ENCODE measurements at regions of chr1 and their contacts with region 1.

Region 1: DNA sequence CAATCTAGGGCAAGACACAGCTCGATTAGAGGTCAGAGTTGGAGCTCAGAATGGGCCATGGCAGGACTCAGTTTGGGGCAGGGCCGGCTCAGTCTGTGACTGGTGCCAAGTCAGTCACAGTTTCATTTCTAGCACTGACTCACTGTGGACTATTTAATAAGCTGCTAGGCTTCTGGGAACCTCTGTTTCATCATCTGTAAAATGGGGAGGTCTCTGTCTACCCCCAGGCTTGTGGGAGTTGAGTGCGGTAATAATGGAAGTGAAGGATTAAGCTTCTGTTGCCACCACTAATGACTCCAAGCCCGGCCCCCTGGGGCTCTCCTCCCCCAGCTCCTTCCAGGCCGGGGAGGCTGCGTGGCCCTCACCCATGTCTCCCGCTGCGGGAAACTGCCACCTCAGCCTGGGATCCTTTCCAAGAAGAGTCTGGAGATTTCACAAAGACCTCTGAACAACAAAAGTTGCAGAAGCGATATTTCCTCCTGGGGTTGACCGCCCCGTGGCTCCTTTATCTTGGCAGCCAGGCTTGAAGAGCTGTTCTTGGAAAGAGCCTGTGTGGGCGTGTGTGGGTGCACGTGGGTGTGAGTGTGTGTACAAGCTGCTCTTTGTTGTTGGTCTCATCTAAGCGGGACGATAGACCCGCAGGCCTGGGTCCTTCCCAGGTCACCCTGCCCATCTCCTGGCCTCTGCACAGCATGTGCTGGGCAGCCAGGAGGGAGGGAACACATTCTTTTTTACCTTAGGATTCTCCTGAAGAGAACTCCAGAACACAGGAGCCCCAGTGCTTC is 29.1 kb downstream of the KNCN start:
- DNase-seq: peak; percentile 69
- ATAC-seq: peak; percentile 97
- H3K4me3 Mint-ChIP-seq: peak overlapping the region; percentile 10
- H3K27ac Mint-ChIP-seq: peak overlapping the region; percentile 73
- H3K4me1 Mint-ChIP-seq: peaks cover 14% of the 10 kb centered on the region
- H3K27me3 Mint-ChIP-seq: peaks cover 29% of the 10 kb centered on the region

Region 2: DNA sequence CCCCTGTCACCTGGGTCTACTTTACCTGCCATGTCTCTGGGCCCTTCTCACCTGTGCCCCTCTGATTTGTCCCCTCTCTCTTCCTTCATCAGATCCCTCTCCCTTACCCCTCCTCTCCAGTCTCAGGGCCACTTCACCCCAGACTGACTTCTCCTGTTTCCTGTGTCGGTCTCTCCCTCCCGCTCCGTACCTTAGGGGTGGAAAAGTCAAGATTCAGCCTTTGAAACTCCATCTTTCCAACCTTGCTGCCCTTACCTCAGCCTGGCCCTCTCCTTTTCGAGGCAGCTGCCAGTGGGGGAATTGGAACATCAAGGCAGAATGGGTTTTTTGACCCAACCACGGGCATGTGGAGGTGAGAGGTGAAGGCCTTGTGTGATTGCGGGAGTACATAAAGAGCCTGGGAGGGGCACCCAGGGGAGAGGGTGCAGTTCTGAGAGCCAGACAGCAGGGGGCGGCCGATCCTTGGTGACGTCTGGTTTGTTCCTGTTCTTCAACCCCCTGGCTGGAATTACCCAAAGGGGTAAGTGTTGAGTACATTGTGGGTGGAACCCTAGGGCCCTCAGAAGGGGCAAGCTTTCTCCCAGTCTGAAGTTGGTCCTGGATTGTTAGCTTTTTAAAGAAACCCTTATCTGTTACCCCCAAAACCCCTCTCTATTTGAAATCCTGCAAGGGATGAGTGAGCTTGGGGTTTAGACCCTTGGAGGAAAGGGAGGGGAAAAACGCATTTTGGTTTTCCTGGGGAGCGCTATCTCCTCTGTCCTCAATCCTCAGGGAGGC is 45.0 kb before region 1 on chr1:
- CTCF ChIA-PET with region 1: interaction called, 115 read pairs
- POLR2A ChIA-PET with region 1: no interaction called
- intact Hi-C with region 1: no loop called
- DNase-seq: peak; percentile 89
- ATAC-seq: peak; percentile 98
- H3K4me3 Mint-ChIP-seq: no peak overlapping the region
- H3K27ac Mint-ChIP-seq: no peak overlapping the region
- H3K4me1 Mint-ChIP-seq: no peaks in the 10 kb centered on the region
- H3K27me3 Mint-ChIP-seq: peaks cover 24% of the 10 kb centered on the region

Region 3: DNA sequence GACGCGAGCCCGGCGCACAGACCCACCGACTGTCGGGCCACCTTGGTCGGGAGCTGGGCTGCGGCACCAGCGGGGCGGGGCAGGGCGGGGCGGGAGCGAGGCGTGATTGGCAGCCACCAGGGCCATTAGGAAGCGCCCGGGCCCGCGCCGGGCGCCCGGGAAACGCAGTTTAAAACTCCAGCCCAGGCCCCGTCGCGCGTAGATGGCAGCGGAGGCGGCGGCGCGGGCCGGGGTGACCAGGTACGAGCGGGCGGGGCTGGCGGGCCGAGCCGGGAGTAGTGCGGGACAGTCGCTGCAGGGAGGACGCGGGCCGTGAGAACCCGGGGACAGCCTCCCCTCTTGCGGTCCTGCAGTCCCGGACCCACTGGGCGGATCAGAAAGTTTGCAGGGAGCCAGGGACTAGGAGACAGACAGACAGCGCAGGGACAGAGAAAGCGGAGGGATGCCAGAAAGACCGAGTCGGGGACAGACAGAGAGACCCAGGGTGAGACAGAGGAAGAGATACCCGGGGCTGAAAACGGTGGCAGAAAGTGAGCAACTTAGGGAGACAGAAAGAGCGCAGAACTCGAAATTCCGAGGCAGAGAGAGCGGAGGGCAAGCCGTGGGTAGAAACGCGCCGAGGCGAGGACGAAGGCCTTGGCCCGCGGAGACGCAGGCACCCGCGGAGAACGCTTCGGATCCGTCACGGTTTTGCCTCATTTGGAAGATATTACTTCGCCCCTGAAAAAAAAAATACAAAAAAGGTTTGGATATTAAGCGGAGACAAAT is 32.6 kb before region 1 on chr1 and contains the start of gene DMBX1:
- CTCF ChIA-PET with region 1: interaction called, 19 read pairs
- POLR2A ChIA-PET with region 1: no interaction called
- intact Hi-C with region 1: loop called in 1 of 2 experiments (anchors 1 kb)
- DNase-seq: peak; percentile 74
- ATAC-seq: peak; percentile 79
- H3K4me3 Mint-ChIP-seq: peak within 1 kb of the TSS; percentile 66
- H3K27ac Mint-ChIP-seq: no peak within 1 kb of the TSS
- H3K4me1 Mint-ChIP-seq: peaks cover 22% of the 10 kb centered on the region
- H3K27me3 Mint-ChIP-seq: peaks cover 76% of the 10 kb centered on the region
- total RNA-seq, gene DMBX1: 0.05 TPM in 1 of 2 experiments, not detected in the other

Region 4: DNA sequence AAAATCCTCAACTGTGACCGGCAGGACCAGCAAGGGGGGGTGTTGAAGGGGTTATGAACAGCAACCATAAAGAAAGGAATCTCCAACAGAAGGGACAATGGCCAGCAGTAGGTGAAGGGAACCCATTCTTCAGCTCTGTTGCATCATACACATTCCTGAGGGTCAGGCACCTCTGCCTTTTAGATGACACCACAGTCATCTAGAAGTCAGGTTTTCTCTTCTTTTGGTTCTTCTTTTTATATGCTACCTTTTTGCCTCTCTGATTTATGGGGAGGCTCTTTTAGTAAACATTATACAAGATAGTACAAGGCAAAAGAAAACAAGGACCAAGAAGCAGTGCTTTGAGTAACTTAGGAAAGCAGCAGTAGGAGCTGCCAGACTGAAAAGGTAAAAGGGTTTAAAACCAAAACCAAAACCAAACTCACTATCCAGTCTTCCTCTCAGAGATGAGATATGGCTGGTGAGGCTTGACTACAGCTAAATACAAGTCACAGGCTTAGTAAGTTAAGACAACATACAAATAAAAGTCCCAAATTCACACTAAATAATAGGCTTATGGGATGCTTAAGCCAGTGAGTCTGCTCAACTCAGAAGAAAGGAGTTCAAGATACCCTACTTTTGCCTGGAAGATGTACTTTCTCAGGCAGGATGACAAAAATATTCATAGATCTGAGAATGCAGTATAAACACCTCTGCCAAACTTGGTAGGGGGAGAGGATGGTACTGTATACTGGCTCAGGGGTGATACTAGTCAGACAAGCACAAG is 153.4 kb after region 1 on chr1:
- CTCF ChIA-PET with region 1: no interaction called
- POLR2A ChIA-PET with region 1: no interaction called
- intact Hi-C with region 1: no loop called
- DNase-seq: no peak
- ATAC-seq: peak; percentile 76
- H3K4me3 Mint-ChIP-seq: peak overlapping the region; percentile 24
- H3K27ac Mint-ChIP-seq: peak overlapping the region; percentile 94
- H3K4me1 Mint-ChIP-seq: peaks cover 31% of the 10 kb centered on the region
- H3K27me3 Mint-ChIP-seq: no peaks in the 10 kb centered on the region

Measured in activated CD4-positive, alpha-beta T cell treated with anti-CD3 and anti-CD28 coated beads for 36 hours (primary cell).